ENCODE measurements at regions of chr20 and their contacts with region 1.

Region 1: GRCh38 chr20:3795511-3796468 is at the start of gene CDC25B:
- DNase-seq: peak; percentile 59
- ATAC-seq: peak; percentile 83
- H3K4me3 ChIP-seq: peak within 1 kb of the TSS; percentile 77
- H3K27ac ChIP-seq: peak within 1 kb of the TSS; percentile 81
- H3K4me1 ChIP-seq: peaks cover 36% of the 10 kb centered on the region
- H3K27me3 ChIP-seq: no peaks in the 10 kb centered on the region
- CTCF ChIP-seq: peak in 2 of 3 experiments; percentile 12 to 48; a peak in 2 of 6 replicates
- EP300 ChIP-seq: 0 out of 4 replicates have a peak, but pooled peaks of 1 of the 2 experiments have one; percentile 15
- POLR2A ChIP-seq: peak; percentile 74
- RAD21 ChIP-seq: no peak; the same call in 1 of the 2 replicates
- polyA plus RNA-seq, gene CDC25B: 4.6 to 8.6 TPM

Region 2: DNA sequence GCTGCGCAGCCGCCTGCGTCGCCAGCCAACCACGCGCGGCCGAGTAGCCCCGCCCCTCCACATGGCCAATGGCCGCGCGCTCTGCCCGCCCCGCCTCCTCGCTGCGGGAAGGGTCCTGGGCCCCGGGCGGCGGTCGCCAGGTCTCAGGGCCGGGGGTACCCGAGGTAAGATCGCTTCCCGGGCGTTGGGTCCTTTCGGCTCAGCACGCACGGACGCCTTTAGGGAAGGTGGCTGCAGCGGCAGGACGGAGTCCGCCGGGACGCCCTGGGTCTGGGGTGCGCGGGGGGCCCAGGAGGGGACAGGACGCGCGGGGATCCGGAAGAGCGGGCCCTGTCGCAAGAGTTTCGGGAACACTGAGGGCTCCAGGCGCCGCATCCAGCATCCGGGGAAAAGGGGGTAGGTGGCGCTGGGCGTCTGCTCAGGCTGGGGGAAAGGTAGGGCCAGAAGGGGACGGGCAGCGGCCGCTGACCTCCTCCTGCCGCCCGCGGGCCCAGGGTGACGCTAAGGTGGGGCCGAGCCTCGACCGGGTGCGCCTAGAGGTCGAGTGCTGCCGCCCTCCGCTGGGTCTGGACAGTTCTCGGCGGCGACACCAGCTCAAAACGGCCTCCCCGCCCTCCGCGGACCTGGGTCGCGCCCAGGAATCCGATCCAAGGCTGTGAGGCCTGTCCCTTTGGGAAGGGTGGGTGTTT is 51.1 kb after region 1 on chr20 and contains the start of gene MAVS:
- CTCF ChIA-PET with region 1: interaction called, 3 read pairs
- POLR2A ChIA-PET with region 1: interaction called, 6 read pairs
- RAD21 ChIA-PET with region 1: interaction called, 4 read pairs
- SMC1A ChIA-PET with region 1: interaction called, 3 read pairs
- in situ Hi-C with region 1: no loop called
- intact Hi-C with region 1: loop called (anchors 2 kb)
- DNase-seq: peak; percentile 36
- ATAC-seq: peak; percentile 98
- H3K4me3 ChIP-seq: peak within 1 kb of the TSS; percentile 87
- H3K27ac ChIP-seq: peak within 1 kb of the TSS; percentile 79
- H3K4me1 ChIP-seq: peaks cover 10% of the 10 kb centered on the region
- H3K27me3 ChIP-seq: no peaks in the 10 kb centered on the region
- CTCF ChIP-seq: no peak
- EP300 ChIP-seq: no peak
- POLR2A ChIP-seq: peak; percentile 98
- RAD21 ChIP-seq: no peak
- polyA plus RNA-seq, gene MAVS: 1.6 to 2.0 TPM

Region 3: GRCh38 chr20:3911956-3912355 is 116.2 kb after region 1 on chr20:
- CTCF ChIA-PET with region 1: no interaction called
- POLR2A ChIA-PET with region 1: no interaction called
- RAD21 ChIA-PET with region 1: no interaction called
- SMC1A ChIA-PET with region 1: no interaction called
- in situ Hi-C with region 1: no loop called
- intact Hi-C with region 1: loop called (anchors 5 kb)
- DNase-seq: no peak
- ATAC-seq: no peak
- H3K4me3 ChIP-seq: no peak overlapping the region
- H3K27ac ChIP-seq: no peak overlapping the region
- H3K4me1 ChIP-seq: peaks cover 26% of the 10 kb centered on the region
- H3K27me3 ChIP-seq: no peaks in the 10 kb centered on the region
- CTCF ChIP-seq: no peak
- EP300 ChIP-seq: no peak
- POLR2A ChIP-seq: 0 out of 2 replicates have a peak, but pooled peaks have one; percentile 21
- RAD21 ChIP-seq: no peak

Measured in GM12878 (cell line).